ENCODE measurements at regions of chr10 and their contacts with region 1.

Region 1: GRCh38 chr10:47183704-47184041 is 116.3 kb upstream of the GDF10 start:
- DNase-seq: peak; percentile 92
- H3K4me3 Mint-ChIP-seq: peak overlapping the region; percentile 62
- H3K27ac Mint-ChIP-seq: peak overlapping the region; percentile 80
- H3K4me1 Mint-ChIP-seq: peaks cover 28% of the 10 kb centered on the region
- H3K27me3 Mint-ChIP-seq: no peaks in the 10 kb centered on the region
- CTCF ChIP-seq: no peak

Region 2: GRCh38 chr10:47152861-47153349 is 30.8 kb before region 1 on chr10:
- CTCF ChIA-PET with region 1: no interaction called
- POLR2A ChIA-PET with region 1: no interaction called
- intact Hi-C with region 1: no loop called
- DNase-seq: peak; percentile 83
- H3K4me3 Mint-ChIP-seq: no peak overlapping the region
- H3K27ac Mint-ChIP-seq: no peak overlapping the region
- H3K4me1 Mint-ChIP-seq: peaks cover 7% of the 10 kb centered on the region
- H3K27me3 Mint-ChIP-seq: peaks cover 15% of the 10 kb centered on the region
- CTCF ChIP-seq: peak; percentile 33

Region 3: GRCh38 chr10:47165711-47166524 is 17.8 kb before region 1 on chr10:
- CTCF ChIA-PET with region 1: no interaction called
- POLR2A ChIA-PET with region 1: interaction called, 12 read pairs
- intact Hi-C with region 1: no loop called
- DNase-seq: peak; percentile 67
- H3K4me3 Mint-ChIP-seq: peak overlapping the region; percentile 36
- H3K27ac Mint-ChIP-seq: peak overlapping the region; percentile 77
- H3K4me1 Mint-ChIP-seq: peaks cover 48% of the 10 kb centered on the region
- H3K27me3 Mint-ChIP-seq: no peaks in the 10 kb centered on the region
- CTCF ChIP-seq: no peak

Region 4: DNA sequence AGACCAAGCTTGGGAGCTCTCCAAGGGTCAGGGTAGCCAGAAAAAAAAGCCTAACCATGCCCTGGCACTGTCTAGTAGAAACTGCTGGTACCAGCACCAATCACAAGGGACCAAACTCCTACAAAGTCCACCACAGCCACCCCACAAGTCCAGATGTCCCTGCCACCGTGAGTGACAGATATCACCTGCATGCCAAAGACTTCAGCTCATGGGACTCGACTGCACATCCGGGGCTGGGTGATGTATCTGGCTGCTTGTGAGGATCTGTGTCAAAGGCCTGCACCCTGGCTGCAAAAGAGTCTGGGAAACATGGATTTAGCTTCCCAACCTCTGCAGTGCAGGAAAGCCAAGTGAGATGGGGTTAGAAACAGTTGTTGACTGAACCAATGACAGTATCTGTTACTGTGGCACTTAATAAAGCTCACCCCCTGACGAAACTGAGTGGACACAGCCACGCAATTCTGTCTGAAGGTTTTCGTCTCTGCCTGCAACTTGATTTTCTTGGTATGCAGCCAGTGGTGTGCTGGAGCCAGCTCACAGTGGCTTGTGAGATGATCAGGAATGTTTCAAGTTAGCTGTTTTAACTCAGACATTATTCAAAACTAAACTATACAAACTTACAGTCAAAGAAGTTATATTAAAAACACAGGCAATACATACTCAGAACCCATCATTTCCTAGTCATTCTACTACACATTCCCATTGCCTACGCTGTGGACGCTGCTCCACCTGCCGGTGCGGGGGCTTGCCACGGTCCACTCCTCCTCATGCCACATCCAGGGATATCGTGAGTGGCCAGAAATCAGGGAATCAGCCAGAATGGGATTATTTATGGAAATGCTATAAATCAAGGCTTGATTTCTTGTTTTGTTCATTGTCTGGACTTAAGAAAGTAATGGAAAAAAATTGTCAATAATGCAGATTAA is 191.2 kb after region 1 on chr10:
- CTCF ChIA-PET with region 1: no interaction called
- POLR2A ChIA-PET with region 1: no interaction called
- intact Hi-C with region 1: no loop called
- DNase-seq: no peak
- H3K4me3 Mint-ChIP-seq: no peak overlapping the region
- H3K27ac Mint-ChIP-seq: no peak overlapping the region
- H3K4me1 Mint-ChIP-seq: peaks cover 8% of the 10 kb centered on the region
- H3K27me3 Mint-ChIP-seq: peaks cover 37% of the 10 kb centered on the region
- CTCF ChIP-seq: no peak